Sigmoid colon (tissue), 7 donors: ENCODE measurements at regions of chr2 and their contacts with region 1.

Region 1: GRCh38 chr2:27489498-27490397 is at the start of gene IFT172:
- DNase-seq: peak; percentile 100
- H3K4me3 ChIP-seq: peak within 1 kb of the TSS; percentile 56 to 71 (median 68)
- H3K27ac ChIP-seq: peak within 1 kb of the TSS; percentile 68 to 86 (median 80)
- H3K4me1 ChIP-seq: peaks cover 0 to 22% (median 14%) of the 10 kb centered on the region in 4 donors
- H3K27me3 ChIP-seq: no peaks in the 10 kb centered on the region
- CTCF ChIP-seq: no peak
- EP300 ChIP-seq: peak in 1 of 4 donors; percentile 38
- POLR2A ChIP-seq: peak; percentile 42 to 68
- total RNA-seq, gene IFT172: 25.7 to 37.7 (median 33.9) TPM

Region 2: DNA sequence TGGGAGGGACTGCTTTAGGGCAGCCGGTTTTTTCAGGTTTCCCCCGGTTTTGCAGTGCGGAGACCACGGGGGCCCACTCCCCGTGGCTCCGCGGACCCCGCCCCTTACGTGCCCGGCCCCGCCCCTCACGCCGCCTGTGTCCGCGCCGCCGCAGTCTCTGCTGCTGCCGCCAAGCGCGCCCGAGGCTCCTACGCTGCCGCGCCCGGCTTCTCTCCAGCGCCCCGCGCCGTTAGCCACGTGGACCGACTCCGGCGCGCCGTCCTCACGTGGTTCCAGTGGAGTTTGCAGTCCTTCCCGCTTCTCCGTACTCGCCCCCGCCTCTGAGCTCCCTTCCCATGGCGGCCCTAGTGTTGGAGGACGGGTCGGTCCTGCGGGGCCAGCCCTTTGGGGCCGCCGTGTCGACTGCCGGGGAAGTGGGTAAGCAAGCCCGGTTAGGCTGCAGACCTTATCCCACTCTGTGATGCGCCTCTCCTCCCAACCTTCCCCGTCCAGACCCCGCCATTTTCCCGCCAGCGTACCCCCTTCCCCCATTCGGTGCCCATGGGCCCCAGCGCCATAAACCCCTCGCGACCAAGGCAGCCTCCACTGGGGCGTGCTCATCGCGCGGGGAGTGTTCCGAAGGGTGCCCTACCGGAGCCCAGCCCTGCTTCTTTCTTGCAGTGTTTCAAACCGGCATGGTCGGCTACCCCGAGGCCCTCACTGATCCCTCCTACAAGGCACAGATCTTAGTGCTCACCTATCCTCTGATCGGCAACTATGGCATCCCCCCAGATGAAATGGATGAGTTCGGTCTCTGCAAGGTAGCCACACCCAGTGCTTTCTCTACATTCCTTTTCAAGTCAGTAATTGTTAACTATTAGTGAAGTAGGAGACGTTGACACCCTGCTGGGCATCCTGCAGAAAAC is 272.3 kb before region 1 on chr2 and contains the start of gene CAD:
- intact Hi-C with region 1: loop called (anchors 10 kb)
- DNase-seq: peak; percentile 93
- H3K4me3 ChIP-seq: peak within 1 kb of the TSS; percentile 47 to 71 (median 66)
- H3K27ac ChIP-seq: peak within 1 kb of the TSS; percentile 74 to 79 (median 77)
- H3K4me1 ChIP-seq: peaks cover 0 to 36% (median 26%) of the 10 kb centered on the region in 4 donors
- H3K27me3 ChIP-seq: no peaks in the 10 kb centered on the region
- CTCF ChIP-seq: peak in 3 of 4 experiments; percentile 9 to 30 (median 25)
- EP300 ChIP-seq: no peak
- POLR2A ChIP-seq: no peak
- total RNA-seq, gene CAD: 9.1 to 25.2 (median 17.1) TPM

Region 3: GRCh38 chr2:27233341-27233740 is 256.4 kb before region 1 on chr2:
- intact Hi-C with region 1: no loop called
- DNase-seq: peak; percentile 48
- H3K4me3 ChIP-seq: no peak overlapping the region
- H3K27ac ChIP-seq: no peak overlapping the region
- H3K4me1 ChIP-seq: no peaks in the 10 kb centered on the region
- H3K27me3 ChIP-seq: no peaks in the 10 kb centered on the region
- CTCF ChIP-seq: no peak
- EP300 ChIP-seq: no peak
- POLR2A ChIP-seq: no peak

Region 4: GRCh38 chr2:27582695-27583389 is 93.1 kb after region 1 on chr2 and contains the start of gene ZNF512:
- intact Hi-C with region 1: loop called (anchors 2 kb)
- DNase-seq: peak; percentile 98
- H3K4me3 ChIP-seq: peak within 1 kb of the TSS; percentile 56 to 69 (median 58)
- H3K27ac ChIP-seq: peak within 1 kb of the TSS; percentile 72 to 80 (median 76)
- H3K4me1 ChIP-seq: peaks cover 0 to 25% (median 21%) of the 10 kb centered on the region in 4 donors
- H3K27me3 ChIP-seq: no peaks in the 10 kb centered on the region
- CTCF ChIP-seq: no peak
- EP300 ChIP-seq: no peak
- POLR2A ChIP-seq: peak; percentile 17 to 21
- total RNA-seq, gene ZNF512: 30.7 to 44.3 (median 39.4) TPM

Region 5: GRCh38 chr2:27615316-27615715 is 125.6 kb after region 1 on chr2:
- intact Hi-C with region 1: no loop called
- DNase-seq: no peak
- H3K4me3 ChIP-seq: no peak overlapping the region
- H3K27ac ChIP-seq: no peak overlapping the region
- H3K4me1 ChIP-seq: no peaks in the 10 kb centered on the region
- H3K27me3 ChIP-seq: no peaks in the 10 kb centered on the region
- CTCF ChIP-seq: no peak
- EP300 ChIP-seq: no peak
- POLR2A ChIP-seq: no peak

Region 6: GRCh38 chr2:27628767-27629709 is 139.3 kb after region 1 on chr2 and contains the starts of genes CCDC121 and GPN1:
- intact Hi-C with region 1: loop called (anchors 5 kb)
- DNase-seq: peak; percentile 90
- H3K4me3 ChIP-seq: peak within 1 kb of the TSS; percentile 60 to 94 (median 70)
- H3K27ac ChIP-seq: peak within 1 kb of the TSS; percentile 67 to 80 (median 76)
- H3K4me1 ChIP-seq: peaks cover 0 to 25% (median 18%) of the 10 kb centered on the region in 4 donors
- H3K27me3 ChIP-seq: no peaks in the 10 kb centered on the region
- CTCF ChIP-seq: no peak
- EP300 ChIP-seq: no peak
- POLR2A ChIP-seq: peak in 1 of 2 donors; percentile 14
- total RNA-seq, gene CCDC121: 3.8 to 8.6 (median 8.0) TPM
- total RNA-seq, gene GPN1: 15.2 to 24.4 (median 21.0) TPM